PC-3 (cell line): ENCODE measurements at regions of chr12 and their contacts with region 1.

Region 1: GRCh38 chr12:123070267-123071081 is 80.4 kb downstream of the PITPNM2 start:
- DNase-seq: no peak
- ATAC-seq: no peak; the same call in 1 of the 2 replicates
- H3K4me3 ChIP-seq: no peak overlapping the region
- H3K27ac ChIP-seq: no peak overlapping the region
- H3K4me1 ChIP-seq: peaks cover 13% of the 10 kb centered on the region
- H3K27me3 ChIP-seq: no peaks in the 10 kb centered on the region
- CTCF ChIP-seq: no peak

Region 2: DNA sequence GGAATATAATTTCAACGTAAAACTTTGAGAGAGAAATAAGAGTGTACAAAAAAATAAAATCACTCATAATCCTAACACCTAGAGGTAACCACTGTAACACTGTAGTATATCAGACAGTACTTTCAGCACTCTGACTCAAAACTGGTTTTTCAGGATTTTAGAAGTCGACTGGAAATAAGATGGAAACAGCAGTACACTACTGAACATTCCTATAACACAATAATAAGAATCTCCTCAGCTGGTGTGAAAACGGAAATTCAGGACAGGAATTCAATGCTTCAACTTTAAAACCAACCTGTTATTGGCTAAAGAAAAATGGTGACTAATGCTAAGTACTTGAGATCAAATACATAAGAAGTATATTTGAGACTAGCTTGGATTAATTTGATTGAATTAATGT is 92.8 kb after region 1 on chr12:
- CTCF ChIA-PET with region 1: no interaction called
- POLR2A ChIA-PET with region 1: interaction called, 17 read pairs
- intact Hi-C with region 1: no loop called
- DNase-seq: peak; percentile 90
- ATAC-seq: peak; percentile 83
- H3K4me3 ChIP-seq: no peak overlapping the region
- H3K27ac ChIP-seq: peak overlapping the region; percentile 68
- H3K4me1 ChIP-seq: peaks cover 25% of the 10 kb centered on the region
- H3K27me3 ChIP-seq: no peaks in the 10 kb centered on the region
- CTCF ChIP-seq: no peak